MCF 10A (cell line): ENCODE measurements at regions of chr21 and their contacts with region 1.

Region 1: DNA sequence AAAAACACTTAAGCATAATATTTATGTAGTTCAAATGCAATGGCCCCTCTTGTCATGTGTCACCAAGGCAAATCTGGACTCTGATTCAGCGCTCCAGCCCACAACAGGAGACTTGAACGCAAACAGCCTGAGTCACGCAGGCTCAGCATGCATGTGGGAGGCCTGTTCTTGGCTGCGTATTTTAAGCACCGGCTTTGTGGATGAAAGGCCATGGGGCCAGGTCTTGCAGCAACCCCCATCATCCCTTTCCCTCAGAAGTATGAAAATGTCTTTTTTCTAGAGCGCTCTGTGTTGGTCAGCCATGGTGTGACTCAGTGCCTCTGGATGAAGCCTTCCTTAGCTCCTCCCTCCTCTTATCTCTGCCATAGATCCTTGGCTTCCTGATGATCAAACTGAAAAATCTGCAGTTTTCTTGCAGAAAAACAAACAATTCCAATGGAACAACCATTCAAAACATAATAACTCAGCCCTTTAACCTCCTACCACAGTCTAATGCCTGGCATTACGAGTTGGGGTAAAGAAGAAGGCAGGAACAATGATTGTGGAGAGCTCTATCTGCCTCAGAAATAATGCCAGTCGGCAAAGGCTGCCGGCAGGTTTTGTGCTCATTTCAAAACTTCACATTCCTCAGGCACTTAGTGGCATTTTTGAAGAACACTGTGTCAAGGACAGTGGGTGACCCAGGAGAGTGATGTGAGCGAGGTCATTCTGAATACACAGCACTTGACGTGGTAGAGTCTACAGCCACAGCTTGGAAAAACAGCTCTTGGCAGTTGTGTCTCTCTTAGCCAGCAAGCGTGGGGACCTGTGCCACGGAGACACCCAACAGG is 167.5 kb downstream of the CLIC6 start:
- DNase-seq: peak; percentile 98
- H3K4me3 Mint-ChIP-seq: peak overlapping the region; percentile 64
- H3K27ac Mint-ChIP-seq: peak overlapping the region; percentile 94
- H3K4me1 Mint-ChIP-seq: peaks cover 31% of the 10 kb centered on the region
- H3K27me3 Mint-ChIP-seq: no peaks in the 10 kb centered on the region
- CTCF ChIP-seq: no peak

Region 2: GRCh38 chr21:34782506-34783365 is 53.6 kb before region 1 on chr21:
- CTCF ChIA-PET with region 1: no interaction called
- POLR2A ChIA-PET with region 1: no interaction called
- intact Hi-C with region 1: no loop called
- DNase-seq: no peak
- H3K4me3 Mint-ChIP-seq: no peak overlapping the region
- H3K27ac Mint-ChIP-seq: no peak overlapping the region
- H3K4me1 Mint-ChIP-seq: no peaks in the 10 kb centered on the region
- H3K27me3 Mint-ChIP-seq: no peaks in the 10 kb centered on the region
- CTCF ChIP-seq: no peak

Region 3: DNA sequence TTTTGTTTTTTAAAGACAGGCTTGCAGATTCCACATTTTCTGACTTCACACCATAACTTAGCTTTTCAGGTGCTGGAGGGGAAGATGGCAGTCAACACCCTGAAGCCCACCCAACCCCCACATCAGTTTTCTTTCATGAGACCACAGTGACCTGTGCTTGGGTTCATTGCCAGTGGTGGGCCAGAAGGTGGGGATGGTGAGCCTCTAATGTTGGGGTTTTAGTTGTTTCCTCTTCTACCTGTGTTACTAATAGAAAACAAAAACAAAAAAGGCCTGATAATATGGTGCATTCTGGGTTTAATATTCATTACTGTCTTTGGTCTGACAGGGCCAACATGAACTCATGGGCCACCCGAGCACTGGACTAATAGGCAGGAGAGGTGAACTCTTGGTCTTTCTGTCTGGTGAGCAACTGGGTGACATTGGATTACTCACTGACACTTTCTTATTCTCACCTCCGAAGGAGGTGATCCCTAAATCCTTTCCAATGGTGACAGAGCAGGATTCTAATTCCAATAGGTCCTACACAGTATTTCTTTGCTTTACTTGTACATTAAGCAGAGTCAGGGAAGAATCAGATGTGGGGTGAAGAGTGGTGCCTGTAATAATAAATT is 34.7 kb before region 1 on chr21:
- CTCF ChIA-PET with region 1: interaction called, 5 read pairs
- POLR2A ChIA-PET with region 1: interaction called, 8 read pairs
- intact Hi-C with region 1: loop called (anchors 2 kb)
- DNase-seq: peak; percentile 52
- H3K4me3 Mint-ChIP-seq: no peak overlapping the region
- H3K27ac Mint-ChIP-seq: peak overlapping the region; percentile 88
- H3K4me1 Mint-ChIP-seq: peaks cover 45% of the 10 kb centered on the region
- H3K27me3 Mint-ChIP-seq: no peaks in the 10 kb centered on the region
- CTCF ChIP-seq: peak; percentile 24

Region 4: DNA sequence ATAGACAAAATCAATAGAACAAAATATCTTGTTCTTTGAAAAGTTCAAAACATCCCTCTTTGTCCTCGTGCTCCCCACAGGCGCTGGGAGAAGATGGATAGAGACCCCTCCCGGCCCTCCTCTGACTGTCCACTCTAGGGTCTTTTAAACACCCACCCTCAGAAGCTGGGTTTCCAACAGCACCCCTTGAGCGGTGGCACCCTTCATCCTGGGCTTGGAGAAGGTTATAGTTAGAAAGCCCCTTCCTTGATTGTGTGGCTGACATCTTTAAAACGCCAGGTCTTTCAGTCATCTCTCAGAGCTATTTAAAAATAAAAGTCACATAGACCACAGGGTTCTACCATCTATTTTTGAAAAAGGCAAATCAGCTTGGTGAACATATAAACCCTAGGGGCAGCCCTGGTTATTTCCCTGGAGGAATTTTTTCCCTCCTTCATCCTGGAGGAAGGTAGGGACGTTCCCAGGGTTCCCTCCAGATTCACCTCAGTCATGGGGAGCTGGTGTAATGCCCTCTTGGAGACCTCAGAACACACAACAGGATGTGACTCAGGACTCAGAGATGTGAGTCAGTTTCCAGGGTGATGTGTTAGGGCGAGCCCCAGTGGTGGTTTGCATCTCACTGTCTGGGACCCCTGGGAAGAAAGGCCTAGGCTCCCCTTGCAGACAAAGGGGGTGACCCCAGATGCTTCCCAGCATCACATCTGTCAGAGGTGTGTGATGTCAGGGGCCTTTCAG is 29.0 kb before region 1 on chr21:
- CTCF ChIA-PET with region 1: interaction called, 5 read pairs
- POLR2A ChIA-PET with region 1: interaction called, 79 read pairs
- intact Hi-C with region 1: loop called (anchors 2 kb)
- DNase-seq: peak; percentile 98
- H3K4me3 Mint-ChIP-seq: peak overlapping the region; percentile 47
- H3K27ac Mint-ChIP-seq: peak overlapping the region; percentile 99
- H3K4me1 Mint-ChIP-seq: peaks cover 40% of the 10 kb centered on the region
- H3K27me3 Mint-ChIP-seq: no peaks in the 10 kb centered on the region
- CTCF ChIP-seq: no peak

Region 5: GRCh38 chr21:34881894-34882371 is 45.6 kb after region 1 on chr21:
- CTCF ChIA-PET with region 1: interaction called, 4 read pairs
- POLR2A ChIA-PET with region 1: interaction called, 81 read pairs
- intact Hi-C with region 1: loop called (anchors 1 kb)
- DNase-seq: peak; percentile 71
- H3K4me3 Mint-ChIP-seq: peak overlapping the region; percentile 99
- H3K27ac Mint-ChIP-seq: peak overlapping the region; percentile 91
- H3K4me1 Mint-ChIP-seq: peaks cover 48% of the 10 kb centered on the region
- H3K27me3 Mint-ChIP-seq: no peaks in the 10 kb centered on the region
- CTCF ChIP-seq: no peak

Region 6: DNA sequence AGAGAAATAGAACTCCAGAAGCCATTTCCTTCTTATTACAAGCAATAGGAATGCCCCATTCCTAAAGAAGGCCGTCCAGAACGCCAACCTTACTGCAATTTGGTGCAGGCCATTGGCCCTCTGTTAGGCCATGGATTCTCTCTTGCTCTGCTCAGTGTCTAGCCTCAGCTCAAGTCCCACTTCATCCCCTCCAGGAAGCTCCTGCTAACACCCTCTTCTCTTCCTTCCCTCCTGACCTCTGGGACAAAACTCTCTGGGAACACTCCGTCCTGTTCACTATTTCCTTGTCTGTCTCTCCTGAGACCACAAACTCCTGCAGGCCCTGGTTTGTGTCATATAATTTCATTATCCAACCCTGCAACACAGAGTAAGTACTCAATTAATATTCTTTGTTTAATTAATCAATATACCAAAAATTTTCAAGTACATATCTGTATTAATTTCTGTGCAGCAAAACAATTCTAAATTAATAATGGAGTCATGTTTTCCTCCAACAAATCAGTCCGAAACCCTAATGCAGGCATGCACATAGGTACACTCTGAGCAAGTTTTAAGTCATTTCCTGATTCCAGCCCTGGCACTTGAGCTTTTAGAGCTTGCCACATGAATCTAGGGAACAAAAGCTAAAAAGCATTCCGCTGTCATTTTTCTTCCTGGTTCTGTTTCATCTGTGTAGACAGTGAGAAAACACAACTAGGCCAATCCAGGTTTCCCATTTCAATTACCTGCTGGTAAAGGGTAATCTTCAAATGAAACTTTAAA is 978.7 kb after region 1 on chr21:
- CTCF ChIA-PET with region 1: no interaction called
- POLR2A ChIA-PET with region 1: no interaction called
- intact Hi-C with region 1: no loop called
- DNase-seq: no peak
- H3K4me3 Mint-ChIP-seq: no peak overlapping the region
- H3K27ac Mint-ChIP-seq: no peak overlapping the region
- H3K4me1 Mint-ChIP-seq: no peaks in the 10 kb centered on the region
- H3K27me3 Mint-ChIP-seq: no peaks in the 10 kb centered on the region
- CTCF ChIP-seq: no peak